ENCODE measurements at regions of chr4 and their contacts with region 1.

Region 1: DNA sequence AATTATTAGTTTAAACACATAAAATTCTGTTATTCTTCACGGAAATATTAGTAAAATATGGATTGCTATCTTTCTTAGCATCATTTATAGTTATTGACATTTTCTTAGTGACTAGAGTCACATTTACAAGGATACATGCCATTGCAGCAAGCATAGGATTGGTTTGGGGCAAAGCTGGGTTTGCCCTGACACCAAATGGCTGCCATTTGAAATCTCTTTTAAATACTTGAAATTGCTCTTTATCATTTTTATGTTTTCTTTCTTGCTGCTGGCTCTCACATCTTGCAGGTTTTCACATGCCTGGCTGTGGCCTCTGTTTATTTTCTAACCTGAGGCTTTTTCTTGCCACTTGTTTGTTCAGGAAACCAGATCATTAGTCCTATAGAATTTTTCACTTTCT is 39.9 kb downstream of the EGF start:
- DNase-seq: no peak
- ATAC-seq: no peak
- H3K4me3 ChIP-seq: no peak overlapping the region
- H3K27ac ChIP-seq: no peak overlapping the region
- H3K4me1 ChIP-seq: no peaks in the 10 kb centered on the region
- H3K27me3 ChIP-seq: no peaks in the 10 kb centered on the region; a peak in 1 of 5 replicates
- CTCF ChIP-seq: no peak
- EP300 ChIP-seq: no peak
- POLR2A ChIP-seq: no peak
- RAD21 ChIP-seq: no peak

Region 2: GRCh38 chr4:109629775-109630174 is 322.8 kb before region 1 on chr4:
- CTCF ChIA-PET with region 1: no interaction called
- POLR2A ChIA-PET with region 1: no interaction called
- in situ Hi-C with region 1: no loop called
- intact Hi-C with region 1: no loop called
- DNase-seq: no peak
- ATAC-seq: no peak
- H3K4me3 ChIP-seq: no peak overlapping the region
- H3K27ac ChIP-seq: no peak overlapping the region
- H3K4me1 ChIP-seq: no peaks in the 10 kb centered on the region; the same call in 1 of the 2 replicates
- H3K27me3 ChIP-seq: no peaks in the 10 kb centered on the region
- CTCF ChIP-seq: no peak
- EP300 ChIP-seq: no peak
- POLR2A ChIP-seq: no peak
- RAD21 ChIP-seq: no peak

Region 3: DNA sequence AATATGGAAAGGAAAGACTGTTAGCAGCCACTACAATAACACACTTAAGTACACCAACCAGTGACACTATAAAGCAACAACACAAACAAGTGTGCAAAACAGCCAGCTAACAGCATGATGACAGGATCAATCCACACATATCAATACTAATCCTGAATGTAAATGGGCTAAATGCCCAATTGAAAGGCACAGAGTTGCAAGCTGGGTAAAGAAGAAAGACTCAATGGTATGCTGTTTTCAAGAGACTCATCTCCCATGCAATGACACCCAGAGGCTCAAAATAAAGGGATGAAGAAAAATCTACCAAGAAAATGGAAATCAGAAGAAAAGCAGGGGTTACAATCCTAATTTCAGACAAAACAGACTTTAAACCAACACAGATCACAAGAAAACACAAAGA is 429.2 kb after region 1 on chr4:
- CTCF ChIA-PET with region 1: no interaction called
- POLR2A ChIA-PET with region 1: no interaction called
- in situ Hi-C with region 1: no loop called
- intact Hi-C with region 1: loop called (anchors 5 kb)
- DNase-seq: no peak
- ATAC-seq: no peak
- H3K4me3 ChIP-seq: no peak overlapping the region
- H3K27ac ChIP-seq: no peak overlapping the region
- H3K4me1 ChIP-seq: no peaks in the 10 kb centered on the region
- H3K27me3 ChIP-seq: no peaks in the 10 kb centered on the region
- CTCF ChIP-seq: no peak
- EP300 ChIP-seq: no peak
- POLR2A ChIP-seq: no peak
- RAD21 ChIP-seq: no peak

Measured in HepG2 (cell line).